ENCODE measurements at regions of chr2 and their contacts with region 1.

Region 1: DNA sequence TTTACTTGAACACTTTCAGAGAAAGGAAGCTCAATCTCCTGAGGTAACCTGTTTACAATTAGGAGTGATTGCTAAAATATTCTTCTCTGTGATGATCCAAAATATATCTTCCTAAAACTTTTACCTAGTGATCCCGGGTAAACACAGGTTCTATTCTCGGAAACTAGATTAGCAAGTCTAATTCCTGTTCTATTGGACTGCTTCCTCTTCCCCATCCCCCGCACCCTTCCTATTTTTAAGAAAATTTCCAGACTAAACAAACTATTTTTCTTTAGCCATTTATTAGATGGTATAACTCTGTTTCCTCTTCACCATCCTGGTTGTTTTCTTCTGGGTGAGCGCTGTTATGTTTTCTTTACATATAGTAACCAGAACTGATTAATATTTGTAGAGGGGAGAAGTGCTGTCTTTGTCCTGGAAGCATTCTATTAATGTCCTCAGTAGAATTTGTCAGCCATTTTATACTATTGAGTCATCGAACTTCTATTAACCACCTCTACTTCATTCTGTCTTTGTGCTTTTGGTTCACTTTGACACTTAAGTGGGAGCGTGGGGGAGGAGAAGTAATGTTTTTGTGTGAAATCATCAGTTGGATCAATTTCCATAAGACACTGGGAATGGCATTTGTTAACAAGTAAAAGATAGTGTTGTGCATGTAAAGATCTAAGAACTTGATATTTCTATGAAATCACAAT is 31.8 kb downstream of the CREB1 start:
- DNase-seq: no peak
- ATAC-seq: no peak
- H3K4me3 ChIP-seq: no peak overlapping the region
- H3K27ac ChIP-seq: no peak overlapping the region
- H3K4me1 ChIP-seq: peaks cover 4% of the 10 kb centered on the region
- H3K27me3 ChIP-seq: no peaks in the 10 kb centered on the region
- CTCF ChIP-seq: no peak
- EP300 ChIP-seq: no peak
- POLR2A ChIP-seq: no peak
- RAD21 ChIP-seq: no peak

Region 2: GRCh38 chr2:207584952-207585351 is 23.4 kb after region 1 on chr2:
- CTCF ChIA-PET with region 1: no interaction called
- POLR2A ChIA-PET with region 1: no interaction called
- in situ Hi-C with region 1: no loop called
- intact Hi-C with region 1: loop called (anchors 1 kb)
- DNase-seq: no peak
- ATAC-seq: peak; percentile 42; the same call in 2 of the 3 replicates
- H3K4me3 ChIP-seq: no peak overlapping the region
- H3K27ac ChIP-seq: no peak overlapping the region
- H3K4me1 ChIP-seq: no peaks in the 10 kb centered on the region
- H3K27me3 ChIP-seq: no peaks in the 10 kb centered on the region
- CTCF ChIP-seq: no peak
- EP300 ChIP-seq: no peak
- POLR2A ChIP-seq: no peak
- RAD21 ChIP-seq: no peak

Region 3: GRCh38 chr2:207635468-207636200 is 74.1 kb after region 1 on chr2:
- CTCF ChIA-PET with region 1: no interaction called
- POLR2A ChIA-PET with region 1: no interaction called
- in situ Hi-C with region 1: no loop called
- intact Hi-C with region 1: no loop called
- DNase-seq: no peak
- ATAC-seq: peak; percentile 30
- H3K4me3 ChIP-seq: no peak overlapping the region
- H3K27ac ChIP-seq: no peak overlapping the region
- H3K4me1 ChIP-seq: peaks cover 19% of the 10 kb centered on the region
- H3K27me3 ChIP-seq: no peaks in the 10 kb centered on the region; a peak in 3 of 5 replicates
- CTCF ChIP-seq: no peak
- EP300 ChIP-seq: no peak
- POLR2A ChIP-seq: no peak
- RAD21 ChIP-seq: no peak